AG04450 (cell line): ENCODE measurements at regions of chr17 and their contacts with region 1.

Region 1: GRCh38 chr17:3012926-3013581 is 50.4 kb downstream of the OR1D5 start:
- DNase-seq: no peak
- H3K4me3 ChIP-seq: no peak overlapping the region
- H3K27ac ChIP-seq: no peak overlapping the region
- H3K27me3 ChIP-seq: no peaks in the 10 kb centered on the region
- CTCF ChIP-seq: peak; percentile 76

Region 2: GRCh38 chr17:2828397-2829038 is 184.5 kb before region 1 on chr17:
- CTCF ChIA-PET with region 1: interaction called, 101 read pairs
- POLR2A ChIA-PET with region 1: no interaction called
- DNase-seq: no peak
- H3K4me3 ChIP-seq: no peak overlapping the region
- H3K27ac ChIP-seq: no peak overlapping the region
- H3K27me3 ChIP-seq: peaks cover under 1% of the 10 kb centered on the region
- CTCF ChIP-seq: peak; percentile 91

Region 3: GRCh38 chr17:2847381-2848333 is 165.4 kb before region 1 on chr17:
- CTCF ChIA-PET with region 1: interaction called, 35 read pairs
- POLR2A ChIA-PET with region 1: interaction called, 3 read pairs
- DNase-seq: no peak
- H3K4me3 ChIP-seq: no peak overlapping the region
- H3K27ac ChIP-seq: no peak overlapping the region
- H3K27me3 ChIP-seq: peaks cover 2% of the 10 kb centered on the region
- CTCF ChIP-seq: no peak

Region 4: GRCh38 chr17:2867441-2868424 is 145.3 kb before region 1 on chr17:
- CTCF ChIA-PET with region 1: interaction called, 17 read pairs
- POLR2A ChIA-PET with region 1: no interaction called
- DNase-seq: peak; percentile 38
- H3K4me3 ChIP-seq: no peak overlapping the region
- H3K27ac ChIP-seq: no peak overlapping the region
- H3K27me3 ChIP-seq: no peaks in the 10 kb centered on the region
- CTCF ChIP-seq: peak; percentile 35; the same call in 1 of the 2 replicates

Region 5: DNA sequence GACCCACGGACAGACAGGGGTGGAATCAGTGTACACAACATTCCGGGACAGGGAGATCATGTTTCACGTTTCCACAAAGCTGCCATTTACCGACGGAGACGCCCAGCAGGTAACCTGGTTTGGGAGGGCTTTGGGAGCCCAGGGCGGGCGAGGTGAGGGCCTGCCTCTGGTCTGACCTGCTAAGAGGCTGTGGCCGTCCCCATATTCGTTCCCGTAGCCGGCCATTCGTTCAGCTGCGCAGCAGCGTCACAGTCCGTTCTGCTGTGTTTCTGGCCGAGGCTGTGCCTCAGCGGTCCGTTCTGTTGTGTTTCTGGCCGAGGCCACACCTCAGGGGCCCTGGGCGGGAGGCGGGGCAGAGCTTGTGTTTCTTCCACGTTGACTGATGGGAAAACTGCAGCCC is 17.7 kb before region 1 on chr17:
- CTCF ChIA-PET with region 1: no interaction called
- POLR2A ChIA-PET with region 1: no interaction called
- DNase-seq: no peak
- H3K4me3 ChIP-seq: no peak overlapping the region
- H3K27ac ChIP-seq: no peak overlapping the region
- H3K27me3 ChIP-seq: no peaks in the 10 kb centered on the region
- CTCF ChIP-seq: no peak